ENCODE measurements at regions of chr3 and their contacts with region 1.

Region 1: GRCh38 chr3:167734498-167735232 is at the start of gene PDCD10:
- DNase-seq: peak; percentile 99
- H3K4me3 ChIP-seq: peak within 1 kb of the TSS; percentile 87
- H3K27ac ChIP-seq: peak within 1 kb of the TSS; percentile 70
- H3K4me1 ChIP-seq: peaks cover 29% of the 10 kb centered on the region
- H3K27me3 ChIP-seq: no peaks in the 10 kb centered on the region
- CTCF ChIP-seq: no peak
- total RNA-seq, gene PDCD10: 79.5 and 84.6 TPM in 2 replicates

Region 2: GRCh38 chr3:167691366-167691765 is 43.3 kb before region 1 on chr3:
- CTCF ChIA-PET with region 1: no interaction called
- POLR2A ChIA-PET with region 1: no interaction called
- intact Hi-C with region 1: no loop called
- DNase-seq: no peak
- H3K4me3 ChIP-seq: no peak overlapping the region
- H3K27ac ChIP-seq: no peak overlapping the region
- H3K4me1 ChIP-seq: no peaks in the 10 kb centered on the region
- H3K27me3 ChIP-seq: no peaks in the 10 kb centered on the region
- CTCF ChIP-seq: no peak

Region 3: GRCh38 chr3:167830007-167830406 is 95.3 kb after region 1 on chr3:
- CTCF ChIA-PET with region 1: no interaction called
- POLR2A ChIA-PET with region 1: interaction called, 17 read pairs
- intact Hi-C with region 1: no loop called
- DNase-seq: no peak
- H3K4me3 ChIP-seq: no peak overlapping the region
- H3K27ac ChIP-seq: no peak overlapping the region
- H3K4me1 ChIP-seq: no peaks in the 10 kb centered on the region
- H3K27me3 ChIP-seq: no peaks in the 10 kb centered on the region
- CTCF ChIP-seq: no peak

Region 4: DNA sequence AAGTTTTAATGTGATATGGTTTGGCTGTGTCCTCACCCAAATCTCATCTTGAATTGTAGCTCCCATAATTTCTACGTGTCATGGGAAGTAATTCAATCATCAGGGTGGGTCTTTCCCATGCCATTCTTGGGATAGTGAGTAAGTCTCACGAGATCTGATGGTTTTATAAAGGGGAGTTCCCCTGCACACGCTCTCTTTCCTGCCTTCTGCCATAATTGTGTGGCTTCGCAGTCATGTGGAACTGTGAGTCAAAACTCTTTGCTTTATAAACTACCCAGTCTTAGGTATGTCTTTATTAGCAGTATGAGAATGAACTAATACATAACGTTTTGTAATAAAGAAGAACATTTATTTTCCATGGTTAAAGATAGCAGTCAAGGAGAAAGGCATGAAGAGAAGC is 400.3 kb after region 1 on chr3:
- CTCF ChIA-PET with region 1: no interaction called
- POLR2A ChIA-PET with region 1: no interaction called
- intact Hi-C with region 1: no loop called
- DNase-seq: no peak
- H3K4me3 ChIP-seq: no peak overlapping the region
- H3K27ac ChIP-seq: no peak overlapping the region
- H3K4me1 ChIP-seq: no peaks in the 10 kb centered on the region
- H3K27me3 ChIP-seq: no peaks in the 10 kb centered on the region
- CTCF ChIP-seq: no peak

Measured in PC-9 (cell line).